Natural killer cell (primary cell): ENCODE measurements at regions of chr4 and their contacts with region 1.

Region 1: DNA sequence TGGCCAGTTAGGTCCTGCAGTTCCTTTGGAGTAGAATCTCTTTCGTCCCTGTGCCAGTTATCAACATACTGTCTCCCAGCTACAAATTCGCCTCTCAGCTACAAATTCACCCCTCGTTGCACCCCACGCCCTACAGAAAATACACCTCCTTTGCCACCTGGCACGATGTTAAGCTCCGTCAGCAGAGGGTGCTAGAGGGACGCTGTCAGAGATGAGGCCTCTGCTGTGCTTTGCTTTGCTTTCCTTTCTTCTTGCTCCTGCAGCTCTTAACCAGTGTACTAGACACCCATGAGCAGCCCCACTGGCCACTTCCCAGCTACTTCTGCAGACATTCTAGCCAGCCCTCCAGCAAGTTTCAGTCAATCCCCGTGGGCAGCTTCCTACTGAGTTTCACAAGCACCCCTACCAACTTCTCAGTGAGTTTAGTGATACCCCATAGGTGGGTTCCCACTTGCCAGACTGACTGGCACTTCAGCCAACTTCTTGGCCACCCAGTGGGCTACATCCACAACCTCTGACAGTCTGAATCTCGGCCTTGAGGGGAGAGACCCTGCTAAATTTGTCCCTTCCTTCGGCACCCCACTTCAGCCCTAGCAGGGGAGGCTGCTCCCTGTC is 21.8 kb downstream of the HAUS3 start:
- DNase-seq: peak; percentile 70 to 90
- ATAC-seq: peak; percentile 91 to 99 (median 97)
- H3K4me3 ChIP-seq: no peak overlapping the region
- H3K4me3 Mint-ChIP-seq: no peak overlapping the region
- H3K27ac ChIP-seq: no peak overlapping the region
- H3K27ac Mint-ChIP-seq: peak overlapping the region in 1 of 2 donors; percentile 37
- H3K4me1 ChIP-seq: no peaks in the 10 kb centered on the region
- H3K4me1 Mint-ChIP-seq: peaks cover 7 to 8% of the 10 kb centered on the region in 2 donors
- H3K27me3 ChIP-seq: no peaks in the 10 kb centered on the region
- H3K27me3 Mint-ChIP-seq: no peaks in the 10 kb centered on the region
- CTCF ChIP-seq: peak; percentile 88

Region 2: DNA sequence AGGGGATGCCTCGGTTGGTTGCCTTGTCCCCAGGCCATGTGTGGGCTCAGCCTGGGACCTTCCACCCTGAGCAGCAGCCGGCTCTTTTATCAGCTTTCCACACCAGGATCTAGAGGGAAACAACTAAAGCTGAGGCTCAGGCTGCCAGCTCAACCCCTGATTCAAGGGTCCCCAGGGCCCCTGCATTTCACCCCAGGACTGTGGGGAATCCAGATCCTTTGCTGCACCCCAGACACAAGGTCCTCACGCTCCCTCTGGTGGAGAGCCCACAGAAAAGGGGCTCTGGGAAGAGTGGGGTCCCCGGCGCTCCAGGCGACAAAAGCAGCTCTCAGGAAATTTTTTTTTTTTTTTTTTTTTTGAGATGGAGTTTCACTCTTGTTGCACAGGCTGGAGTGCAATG is 134.0 kb after region 1 on chr4:
- intact Hi-C with region 1: loop called (anchors 1 kb)
- DNase-seq: peak in 1 of 2 donors; percentile 69
- ATAC-seq: peak in 2 of 3 donors; percentile 51 to 63
- H3K4me3 ChIP-seq: no peak overlapping the region
- H3K4me3 Mint-ChIP-seq: no peak overlapping the region
- H3K27ac ChIP-seq: no peak overlapping the region
- H3K27ac Mint-ChIP-seq: peak overlapping the region in 1 of 2 donors; percentile 80
- H3K4me1 ChIP-seq: peaks cover 17% of the 10 kb centered on the region
- H3K4me1 Mint-ChIP-seq: peaks cover 5 to 12% of the 10 kb centered on the region in 2 donors
- H3K27me3 ChIP-seq: no peaks in the 10 kb centered on the region
- H3K27me3 Mint-ChIP-seq: no peaks in the 10 kb centered on the region
- CTCF ChIP-seq: peak; percentile 31

Region 3: DNA sequence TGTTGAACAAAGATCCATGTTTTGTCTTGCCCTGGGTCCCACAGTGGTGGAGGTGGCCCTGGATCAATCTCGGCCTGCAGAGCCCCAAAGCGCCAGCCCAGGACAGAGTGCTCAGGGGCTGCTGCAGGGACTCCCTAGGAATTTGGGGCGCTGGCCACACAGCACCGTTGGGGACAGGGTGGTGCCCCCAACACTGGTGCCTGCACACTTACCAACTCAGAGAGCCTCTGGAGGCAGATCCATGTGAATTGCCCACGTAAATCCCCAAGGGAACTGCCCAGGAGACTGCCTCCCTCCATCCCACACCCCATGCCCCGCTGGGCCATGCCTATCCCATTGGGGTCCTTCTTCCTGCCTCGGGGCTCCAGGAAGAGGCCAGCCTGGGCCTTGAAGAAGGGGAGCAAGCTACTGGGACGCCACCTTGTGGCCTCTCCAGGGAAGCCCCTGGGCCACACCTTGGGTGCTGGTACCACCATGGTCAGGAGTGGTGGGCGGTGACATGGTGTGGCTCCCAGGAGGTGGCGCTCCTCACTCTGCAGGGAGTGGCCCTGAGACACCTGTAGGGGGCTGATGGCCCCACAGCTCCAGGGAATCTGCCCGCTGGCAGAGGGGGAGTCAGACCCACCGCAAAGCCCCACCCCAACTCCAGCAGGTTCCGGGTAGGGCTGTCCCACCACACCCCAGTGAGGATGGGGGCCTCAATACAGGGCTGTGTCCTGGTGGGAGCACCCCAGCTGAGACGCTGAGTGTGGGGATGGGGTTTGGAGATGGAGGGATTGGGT is 221.5 kb after region 1 on chr4:
- intact Hi-C with region 1: loop called (anchors 1 kb)
- DNase-seq: peak; percentile 59 to 85
- ATAC-seq: peak; percentile 82 to 98 (median 96)
- H3K4me3 ChIP-seq: no peak overlapping the region
- H3K4me3 Mint-ChIP-seq: no peak overlapping the region
- H3K27ac ChIP-seq: no peak overlapping the region
- H3K27ac Mint-ChIP-seq: no peak overlapping the region
- H3K4me1 ChIP-seq: peaks cover 8% of the 10 kb centered on the region
- H3K4me1 Mint-ChIP-seq: peaks cover 0 to 5% of the 10 kb centered on the region in 2 donors
- H3K27me3 ChIP-seq: no peaks in the 10 kb centered on the region
- H3K27me3 Mint-ChIP-seq: no peaks in the 10 kb centered on the region
- CTCF ChIP-seq: peak; percentile 76

Region 4: GRCh38 chr4:2462992-2463762 is 243.1 kb after region 1 on chr4:
- intact Hi-C with region 1: loop called (anchors 1 kb)
- DNase-seq: no peak
- ATAC-seq: no peak
- H3K4me3 ChIP-seq: no peak overlapping the region
- H3K4me3 Mint-ChIP-seq: peak overlapping the region; percentile 53
- H3K27ac ChIP-seq: no peak overlapping the region
- H3K27ac Mint-ChIP-seq: peak overlapping the region in 1 of 2 donors; percentile 58
- H3K4me1 ChIP-seq: peaks cover 19% of the 10 kb centered on the region
- H3K4me1 Mint-ChIP-seq: peaks cover 6 to 20% of the 10 kb centered on the region in 2 donors
- H3K27me3 ChIP-seq: no peaks in the 10 kb centered on the region
- H3K27me3 Mint-ChIP-seq: peaks cover 0 to 6% of the 10 kb centered on the region in 2 donors
- CTCF ChIP-seq: no peak